SK-N-SH (cell line): ENCODE measurements at regions of chr17 and their contacts with region 1.

Region 1: GRCh38 chr17:73429440-73430164 is 117.8 kb upstream of the CDC42EP4 start:
- DNase-seq: peak; percentile 96
- H3K4me3 ChIP-seq: peak overlapping the region in 1 of 2 experiments; percentile 18; a peak in 1 of 4 replicates
- H3K27ac ChIP-seq: no peak overlapping the region
- H3K4me1 ChIP-seq: peaks cover 0 to 12% of the 10 kb centered on the region in 2 experiments; a peak in 1 of 4 replicates
- H3K27me3 ChIP-seq: no peaks in the 10 kb centered on the region
- CTCF ChIP-seq: peak; percentile 100
- EP300 ChIP-seq: peak in 1 of 2 experiments; percentile 24; a peak in 1 of 4 replicates
- RAD21 ChIP-seq: peak; percentile 100

Region 2: GRCh38 chr17:73410586-73411312 is 18.9 kb before region 1 on chr17:
- CTCF ChIA-PET with region 1: interaction called, 29 read pairs
- POLR2A ChIA-PET with region 1: no interaction called
- DNase-seq: no peak
- H3K4me3 ChIP-seq: no peak overlapping the region
- H3K27ac ChIP-seq: no peak overlapping the region
- H3K4me1 ChIP-seq: no peaks in the 10 kb centered on the region
- H3K27me3 ChIP-seq: no peaks in the 10 kb centered on the region
- CTCF ChIP-seq: no peak
- EP300 ChIP-seq: no peak
- RAD21 ChIP-seq: no peak

Region 3: DNA sequence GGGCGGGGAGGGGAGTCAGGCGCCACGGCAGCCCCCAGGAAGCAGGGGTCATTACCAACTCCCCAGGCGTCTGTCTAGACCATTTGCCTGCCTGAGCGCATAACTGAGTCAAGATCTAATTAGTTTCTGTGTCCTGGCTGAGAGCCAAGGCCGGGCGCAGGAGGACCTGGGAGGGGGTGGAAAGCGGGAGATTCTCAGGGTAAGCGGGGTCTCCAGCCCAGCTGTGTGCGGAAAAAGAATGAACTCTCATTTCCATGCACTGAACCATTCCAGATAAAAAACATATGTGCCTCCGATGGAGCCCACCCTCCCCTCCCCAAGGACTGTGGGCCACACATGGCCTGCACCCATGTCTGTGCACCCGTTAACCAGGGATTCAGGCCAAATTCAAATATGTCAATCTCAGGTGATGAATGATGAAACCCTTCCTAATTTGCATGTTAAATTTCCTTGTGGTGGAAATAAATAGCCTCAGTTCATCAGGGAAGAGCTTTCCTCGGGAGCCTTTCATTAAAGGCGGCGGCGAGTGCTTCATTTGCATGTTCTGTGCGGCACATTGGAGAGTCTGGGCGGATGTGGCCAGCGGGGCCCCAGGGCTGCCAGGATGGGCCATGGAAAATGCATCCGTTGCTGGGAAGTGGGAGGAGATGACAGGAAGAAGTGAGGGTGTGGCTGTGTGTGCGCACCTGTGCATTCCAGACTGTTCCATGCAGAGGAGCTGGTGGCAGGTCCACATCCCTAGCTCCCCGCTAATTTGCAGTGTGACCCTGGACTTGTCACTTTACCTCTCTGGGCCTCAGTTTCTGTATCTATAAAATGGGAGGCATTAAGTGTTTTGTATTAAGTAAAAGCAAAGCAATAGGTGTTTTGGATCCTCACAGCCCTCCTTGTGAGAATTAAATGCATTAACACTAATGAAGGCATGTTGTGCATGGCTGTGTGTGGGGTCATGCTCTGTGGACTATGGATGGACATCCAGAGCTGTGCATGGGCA is 63.5 kb after region 1 on chr17:
- CTCF ChIA-PET with region 1: interaction called, 35 read pairs
- POLR2A ChIA-PET with region 1: no interaction called
- DNase-seq: peak; percentile 93
- H3K4me3 ChIP-seq: no peak overlapping the region; a peak in 1 of 4 replicates
- H3K27ac ChIP-seq: peak overlapping the region in 1 of 2 experiments; percentile 92; a peak in 2 of 4 replicates
- H3K4me1 ChIP-seq: peaks cover 0 to 59% of the 10 kb centered on the region in 2 experiments; a peak in 2 of 4 replicates
- H3K27me3 ChIP-seq: no peaks in the 10 kb centered on the region
- CTCF ChIP-seq: no peak
- EP300 ChIP-seq: peak; percentile 3 to 90; a peak in 2 of 4 replicates
- RAD21 ChIP-seq: peak; percentile 32

Region 4: GRCh38 chr17:73555199-73555960 is 125.8 kb after region 1 on chr17:
- CTCF ChIA-PET with region 1: interaction called, 10 read pairs
- POLR2A ChIA-PET with region 1: no interaction called
- DNase-seq: no peak
- H3K4me3 ChIP-seq: no peak overlapping the region
- H3K27ac ChIP-seq: no peak overlapping the region
- H3K4me1 ChIP-seq: no peaks in the 10 kb centered on the region; a peak in 1 of 4 replicates
- H3K27me3 ChIP-seq: no peaks in the 10 kb centered on the region
- CTCF ChIP-seq: no peak
- EP300 ChIP-seq: no peak
- RAD21 ChIP-seq: no peak

Region 5: DNA sequence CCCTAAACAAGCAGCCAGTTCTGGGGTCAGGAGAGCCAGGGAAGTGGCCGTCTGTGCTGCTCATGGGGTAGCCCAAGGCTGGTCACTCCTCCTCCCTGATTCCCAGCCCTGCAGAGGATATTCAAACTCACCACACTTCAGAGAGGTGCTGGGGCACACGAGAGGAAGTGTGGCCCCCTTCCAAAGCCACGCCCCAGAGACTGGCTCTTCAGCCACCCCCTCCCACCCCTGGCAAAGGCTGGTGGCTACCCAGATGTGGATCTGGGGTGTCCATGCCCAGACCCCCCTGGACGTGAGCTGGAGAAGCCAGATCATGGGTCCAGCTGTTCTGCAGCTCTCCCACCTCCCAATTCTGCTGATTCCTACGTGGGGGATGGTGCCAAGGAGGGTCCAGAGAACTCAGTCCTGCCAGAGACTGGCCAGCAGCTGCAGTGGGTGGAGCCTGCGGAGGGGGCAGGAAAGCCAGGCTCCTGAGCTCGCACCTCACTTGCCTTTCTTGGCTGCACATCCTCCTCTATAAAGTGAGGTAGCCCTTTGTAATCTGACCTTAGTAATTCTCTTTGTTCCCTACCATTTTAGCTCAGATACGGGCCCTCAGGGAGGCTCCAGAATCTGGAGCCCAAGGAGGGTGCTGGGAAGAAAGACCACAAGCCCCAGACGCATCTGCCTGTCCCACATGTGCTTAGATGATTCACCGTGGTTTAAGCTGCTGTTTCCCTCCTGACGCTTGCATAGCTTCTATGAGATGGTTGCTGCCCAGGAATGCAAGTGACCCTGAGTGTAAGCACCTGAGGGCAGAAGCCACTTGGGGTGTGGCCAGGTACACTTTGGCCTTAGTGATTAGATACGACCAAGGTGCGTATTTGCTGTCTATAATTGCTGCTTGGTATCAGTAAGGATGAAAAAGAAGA is 199.3 kb after region 1 on chr17:
- CTCF ChIA-PET with region 1: interaction called, 14 read pairs
- POLR2A ChIA-PET with region 1: no interaction called
- DNase-seq: no peak
- H3K4me3 ChIP-seq: no peak overlapping the region; a peak in 1 of 4 replicates
- H3K27ac ChIP-seq: no peak overlapping the region
- H3K4me1 ChIP-seq: peaks cover 0 to 2% of the 10 kb centered on the region in 2 experiments; a peak in 1 of 4 replicates
- H3K27me3 ChIP-seq: no peaks in the 10 kb centered on the region
- CTCF ChIP-seq: no peak
- EP300 ChIP-seq: no peak
- RAD21 ChIP-seq: no peak

Region 6: GRCh38 chr17:73719588-73720071 is 290.0 kb after region 1 on chr17:
- CTCF ChIA-PET with region 1: interaction called, 20 read pairs
- POLR2A ChIA-PET with region 1: interaction called, 3 read pairs
- DNase-seq: peak; percentile 96
- H3K4me3 ChIP-seq: no peak overlapping the region
- H3K27ac ChIP-seq: peak overlapping the region in 1 of 2 experiments; percentile 95; a peak in 2 of 4 replicates
- H3K4me1 ChIP-seq: peaks cover 0 to 49% of the 10 kb centered on the region in 2 experiments; a peak in 1 of 4 replicates
- H3K27me3 ChIP-seq: no peaks in the 10 kb centered on the region
- CTCF ChIP-seq: no peak
- EP300 ChIP-seq: peak in 1 of 2 experiments; percentile 95; a peak in 2 of 4 replicates
- RAD21 ChIP-seq: peak; percentile 9

Region 7: DNA sequence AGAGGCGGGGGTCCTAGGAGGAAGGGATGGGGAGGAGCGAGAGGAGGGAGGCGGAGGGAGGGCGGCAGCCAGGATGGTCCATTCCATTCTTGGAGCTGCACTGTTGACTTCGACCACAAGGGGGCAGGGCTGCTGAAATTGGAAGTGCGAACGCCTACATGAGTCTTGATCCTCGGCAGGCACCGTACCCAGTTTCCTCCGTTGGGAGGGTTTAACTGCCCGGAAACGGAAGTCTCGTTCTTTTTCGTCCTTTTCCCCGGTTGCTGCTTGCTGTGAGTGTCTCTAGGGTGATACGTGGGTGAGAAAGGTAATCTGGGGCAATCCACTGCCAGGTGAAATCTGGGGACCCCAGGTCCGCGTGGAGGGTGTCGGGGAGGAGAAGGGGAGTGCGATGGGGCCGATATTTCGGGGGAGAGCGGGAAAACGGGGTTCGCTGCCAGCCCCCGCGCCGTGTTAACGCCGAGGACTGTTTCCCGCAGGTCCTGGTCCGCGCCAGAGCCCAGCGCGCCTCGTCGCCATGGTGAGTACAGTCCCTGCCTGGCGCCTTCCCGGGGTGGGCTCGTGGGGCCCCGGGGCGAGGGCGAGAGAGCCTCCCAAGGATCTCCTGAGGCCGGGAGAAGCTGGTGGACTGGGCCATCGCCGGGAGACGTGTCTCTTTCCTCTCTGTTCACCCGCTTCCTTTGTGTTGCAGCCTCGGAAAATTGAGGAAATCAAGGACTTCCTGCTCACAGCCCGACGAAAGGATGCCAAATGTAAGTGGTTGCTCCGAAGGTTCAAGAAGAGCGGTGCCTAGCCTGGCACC is 774.0 kb after region 1 on chr17 and contains the start of gene RPL38:
- CTCF ChIA-PET with region 1: interaction called, 13 read pairs
- POLR2A ChIA-PET with region 1: no interaction called
- DNase-seq: peak; percentile 98
- H3K4me3 ChIP-seq: peak within 1 kb of the TSS; percentile 72 to 99
- H3K27ac ChIP-seq: peak within 1 kb of the TSS; percentile 63 to 81
- H3K4me1 ChIP-seq: peaks cover 22 to 36% of the 10 kb centered on the region in 2 experiments
- H3K27me3 ChIP-seq: no peaks in the 10 kb centered on the region
- CTCF ChIP-seq: peak; percentile 99
- EP300 ChIP-seq: peak in 1 of 2 experiments; percentile 75; a peak in 3 of 4 replicates
- RAD21 ChIP-seq: peak; percentile 57
- polyA plus RNA-seq, gene RPL38: 816 and 4,154 TPM in 2 replicates